Ascending aorta (tissue), 2 donors: ENCODE measurements at regions of chr14 and their contacts with region 1.

Region 1: DNA sequence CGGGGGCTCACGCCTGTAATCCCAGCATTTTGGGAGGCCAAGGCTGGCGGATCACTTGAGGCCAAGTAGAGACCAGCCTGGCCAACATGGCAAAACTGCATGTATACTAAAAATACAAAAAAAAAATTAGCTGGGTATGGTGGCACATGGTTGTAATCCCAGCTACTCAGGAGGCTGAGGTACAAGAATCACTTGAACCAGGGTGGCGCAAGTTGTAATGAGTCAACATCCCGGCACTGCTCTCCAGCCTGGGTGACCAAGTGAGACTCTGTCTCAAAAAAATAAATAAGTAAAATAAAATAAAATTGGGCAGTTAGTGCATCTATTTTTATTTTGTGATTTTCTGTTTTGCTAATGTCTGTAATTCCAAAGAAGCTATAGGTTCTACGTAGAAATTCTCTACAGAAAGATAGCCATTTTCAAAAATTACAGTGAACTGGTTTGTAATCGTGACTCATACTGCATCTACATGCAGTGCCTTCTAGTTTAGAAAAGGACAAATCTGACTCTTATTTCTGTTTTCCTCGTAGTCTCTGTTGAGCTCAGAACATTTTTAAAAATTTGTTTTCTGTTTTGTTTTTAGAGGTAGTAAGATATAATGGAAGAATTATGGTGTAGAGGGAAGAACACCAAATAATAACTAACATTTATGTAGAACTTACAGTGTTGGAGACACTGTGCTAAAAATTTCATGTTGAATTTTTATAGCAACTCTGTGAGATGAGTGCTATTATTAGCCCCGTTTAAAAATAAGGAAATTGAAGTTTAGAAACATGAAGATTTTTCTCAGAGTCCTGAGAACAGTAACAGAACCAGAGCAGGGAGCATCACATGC is 201.1 kb downstream of the SYNE2 start:
- DNase-seq: peak in 1 of 2 donors; percentile 74
- H3K4me3 ChIP-seq: peak overlapping the region in 1 of 2 donors; percentile 15
- H3K27ac ChIP-seq: peak overlapping the region; percentile 84 to 87
- H3K4me1 ChIP-seq: peaks cover 0 to 9% of the 10 kb centered on the region in 2 donors
- H3K27me3 ChIP-seq: no peaks in the 10 kb centered on the region
- CTCF ChIP-seq: no peak

Region 2: DNA sequence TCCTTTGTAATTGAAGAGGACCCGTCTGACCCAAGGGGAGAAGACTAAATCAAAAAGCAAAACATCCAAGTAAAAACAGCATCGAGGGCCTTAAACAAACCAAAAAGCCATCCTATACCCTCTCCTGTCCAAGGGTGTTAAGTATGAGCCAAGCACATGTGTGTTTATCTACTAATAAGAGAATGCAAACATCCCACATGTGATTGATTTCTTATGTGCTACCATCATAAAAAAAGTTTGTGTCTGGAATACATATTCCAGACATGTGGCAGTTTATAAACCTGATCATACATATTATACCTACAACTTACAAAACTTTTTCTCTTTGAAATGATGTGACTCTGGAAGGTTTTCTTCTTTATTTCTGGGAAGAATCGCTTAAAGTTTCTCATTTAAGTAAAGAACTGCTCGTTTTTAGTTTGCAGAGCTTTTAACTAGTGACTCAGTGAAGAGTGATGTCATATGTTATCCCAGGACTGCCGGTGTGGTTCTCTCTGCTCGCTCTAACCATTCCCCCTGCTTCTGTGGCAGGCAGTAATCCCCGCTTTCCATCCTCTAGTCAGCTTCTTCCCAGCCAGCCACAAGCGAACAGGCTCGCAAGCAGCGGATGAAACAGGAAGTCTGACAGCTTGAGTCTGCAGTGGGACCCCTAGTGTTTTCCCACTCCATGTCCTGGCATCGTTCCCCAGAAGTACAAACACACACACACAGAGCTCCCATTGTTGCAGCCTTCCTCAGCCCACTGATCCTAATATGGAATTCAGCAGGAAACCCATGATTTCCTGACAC is 850.1 kb before region 1 on chr14:
- intact Hi-C with region 1: no loop called
- DNase-seq: peak; percentile 13 to 91
- H3K4me3 ChIP-seq: peak overlapping the region; percentile 48 to 69
- H3K27ac ChIP-seq: peak overlapping the region; percentile 90 to 93
- H3K4me1 ChIP-seq: peaks cover 0 to 3% of the 10 kb centered on the region in 2 donors
- H3K27me3 ChIP-seq: no peaks in the 10 kb centered on the region
- CTCF ChIP-seq: peak in 1 of 3 experiments; percentile 17

Region 3: GRCh38 chr14:64026600-64026999 is 27.3 kb before region 1 on chr14:
- intact Hi-C with region 1: no loop called
- DNase-seq: no peak
- H3K4me3 ChIP-seq: no peak overlapping the region
- H3K27ac ChIP-seq: no peak overlapping the region
- H3K4me1 ChIP-seq: no peaks in the 10 kb centered on the region
- H3K27me3 ChIP-seq: no peaks in the 10 kb centered on the region
- CTCF ChIP-seq: no peak

Region 4: GRCh38 chr14:64069634-64070359 is 15.9 kb after region 1 on chr14:
- intact Hi-C with region 1: no loop called
- DNase-seq: no peak
- H3K4me3 ChIP-seq: no peak overlapping the region
- H3K27ac ChIP-seq: no peak overlapping the region
- H3K4me1 ChIP-seq: no peaks in the 10 kb centered on the region
- H3K27me3 ChIP-seq: no peaks in the 10 kb centered on the region
- CTCF ChIP-seq: no peak

Region 5: GRCh38 chr14:64082837-64083236 is 28.9 kb after region 1 on chr14:
- intact Hi-C with region 1: loop called (anchors 2 kb)
- DNase-seq: peak in 1 of 2 donors; percentile 86
- H3K4me3 ChIP-seq: no peak overlapping the region
- H3K27ac ChIP-seq: peak overlapping the region; percentile 85 to 88
- H3K4me1 ChIP-seq: peaks cover 4 to 16% of the 10 kb centered on the region in 2 donors
- H3K27me3 ChIP-seq: no peaks in the 10 kb centered on the region
- CTCF ChIP-seq: no peak

Region 6: GRCh38 chr14:64117671-64118402 is 63.9 kb after region 1 on chr14:
- intact Hi-C with region 1: loop called (anchors 1 kb)
- DNase-seq: peak; percentile 72 to 95
- H3K4me3 ChIP-seq: no peak overlapping the region
- H3K27ac ChIP-seq: peak overlapping the region; percentile 90 to 96
- H3K4me1 ChIP-seq: peaks cover 7 to 48% of the 10 kb centered on the region in 2 donors
- H3K27me3 ChIP-seq: no peaks in the 10 kb centered on the region
- CTCF ChIP-seq: no peak